ENCODE measurements at regions of chr4 and their contacts with region 1.

Region 1: GRCh38 chr4:133148690-133149363 is at the start of gene PCDH10:
- DNase-seq: peak; percentile 44 to 64 (median 54)
- ATAC-seq: peak; percentile 86
- H3K4me3 ChIP-seq: no peak within 1 kb of the TSS
- H3K27ac ChIP-seq: no peak within 1 kb of the TSS
- H3K4me1 ChIP-seq: peaks cover 0 to 29% of the 10 kb centered on the region in 2 experiments; a peak in 2 of 5 replicates
- H3K27me3 ChIP-seq: no peaks in the 10 kb centered on the region
- CTCF ChIP-seq: no peak
- EP300 ChIP-seq: no peak
- POLR2A ChIP-seq: 0 out of 2 replicates have a peak, but pooled peaks have one; percentile 30
- RAD21 ChIP-seq: no peak
- polyA plus RNA-seq, gene PCDH10: 0.04 to 0.11 TPM

Region 2: DNA sequence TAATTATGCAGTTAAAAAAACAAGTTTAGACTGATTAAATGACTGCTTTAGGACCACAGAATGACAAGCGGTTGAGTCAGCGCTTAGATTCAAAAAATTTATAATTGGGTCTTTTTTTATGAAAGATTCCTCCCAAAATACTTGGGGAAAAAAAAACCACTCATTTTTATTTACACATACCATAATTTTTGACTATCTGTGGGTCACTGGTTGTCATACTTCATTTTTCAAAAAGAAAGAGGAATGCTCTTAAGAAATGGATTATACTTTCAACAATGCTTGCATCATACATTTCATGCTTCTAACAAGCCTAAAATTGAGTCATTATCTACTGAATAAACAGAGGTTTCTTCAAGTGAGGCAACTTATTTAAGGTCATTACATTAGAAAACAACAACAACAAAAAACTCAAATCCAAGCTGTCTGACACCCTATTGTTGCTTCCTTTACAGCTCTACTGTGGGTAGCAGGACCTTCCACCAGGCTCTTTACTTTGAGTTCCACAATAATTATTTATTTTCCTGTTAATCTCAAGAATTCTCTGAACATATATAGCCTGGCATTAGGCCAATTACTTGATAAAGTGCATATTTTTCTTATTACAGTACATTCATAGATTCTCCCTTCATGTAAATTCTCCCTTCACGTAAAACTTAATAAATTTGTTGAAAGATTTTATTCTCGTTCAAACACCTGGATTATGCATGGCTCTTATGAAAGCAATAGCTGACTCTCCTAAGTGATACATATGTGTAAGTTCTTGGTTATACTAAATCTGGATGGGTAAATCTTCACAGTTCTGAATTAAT is 445.8 kb after region 1 on chr4:
- CTCF ChIA-PET with region 1: no interaction called
- POLR2A ChIA-PET with region 1: no interaction called
- in situ Hi-C with region 1: no loop called
- intact Hi-C with region 1: loop called (anchors 5 kb)
- DNase-seq: no peak
- ATAC-seq: no peak
- H3K4me3 ChIP-seq: no peak overlapping the region
- H3K27ac ChIP-seq: no peak overlapping the region
- H3K4me1 ChIP-seq: no peaks in the 10 kb centered on the region; a peak in 1 of 5 replicates
- H3K27me3 ChIP-seq: no peaks in the 10 kb centered on the region
- CTCF ChIP-seq: no peak
- EP300 ChIP-seq: no peak
- POLR2A ChIP-seq: no peak
- RAD21 ChIP-seq: no peak

Measured in K562 (cell line).